WTC11 (cell line): ENCODE measurements at regions of chr7 and their contacts with region 1.

Region 1: DNA sequence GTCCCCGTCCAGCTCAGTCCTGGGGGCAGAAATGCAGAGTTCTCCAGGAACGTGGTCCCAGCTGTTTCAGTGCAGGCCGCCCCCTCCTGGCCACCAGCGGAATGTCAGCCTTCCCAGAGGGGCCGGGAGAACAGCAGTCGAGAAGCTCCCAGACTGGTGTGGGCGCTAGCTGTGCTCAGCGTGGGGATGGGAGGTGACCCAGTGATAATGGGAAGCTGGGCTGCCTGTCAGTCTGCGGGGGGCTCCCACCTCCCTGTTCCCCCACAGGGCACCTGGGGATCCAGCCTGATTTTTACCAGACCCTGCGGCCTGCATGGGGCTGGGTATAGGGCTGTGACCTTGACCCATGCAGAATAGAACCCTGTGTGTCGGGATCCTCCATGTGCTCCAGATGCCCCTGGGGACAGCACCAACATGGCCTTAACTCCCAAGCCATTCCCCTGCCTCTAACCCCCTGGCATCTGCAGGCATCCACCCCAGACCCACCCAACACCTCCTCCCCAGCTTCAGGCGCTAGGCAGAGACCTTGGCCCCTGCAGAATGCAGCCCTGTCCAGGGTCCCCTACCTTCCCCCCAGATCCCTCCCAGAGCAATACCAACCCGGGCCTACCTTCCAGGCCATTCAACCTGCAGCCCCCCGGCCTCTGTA is 946 bp upstream of the ELN start:
- DNase-seq: peak; percentile 90
- ATAC-seq: peak; percentile 73
- H3K4me3 Mint-ChIP-seq: no peak overlapping the region
- H3K27ac Mint-ChIP-seq: no peak overlapping the region
- H3K4me1 Mint-ChIP-seq: peaks cover 36% of the 10 kb centered on the region
- H3K27me3 Mint-ChIP-seq: peaks cover 10% of the 10 kb centered on the region
- CTCF ChIP-seq: peak; percentile 90

Region 2: DNA sequence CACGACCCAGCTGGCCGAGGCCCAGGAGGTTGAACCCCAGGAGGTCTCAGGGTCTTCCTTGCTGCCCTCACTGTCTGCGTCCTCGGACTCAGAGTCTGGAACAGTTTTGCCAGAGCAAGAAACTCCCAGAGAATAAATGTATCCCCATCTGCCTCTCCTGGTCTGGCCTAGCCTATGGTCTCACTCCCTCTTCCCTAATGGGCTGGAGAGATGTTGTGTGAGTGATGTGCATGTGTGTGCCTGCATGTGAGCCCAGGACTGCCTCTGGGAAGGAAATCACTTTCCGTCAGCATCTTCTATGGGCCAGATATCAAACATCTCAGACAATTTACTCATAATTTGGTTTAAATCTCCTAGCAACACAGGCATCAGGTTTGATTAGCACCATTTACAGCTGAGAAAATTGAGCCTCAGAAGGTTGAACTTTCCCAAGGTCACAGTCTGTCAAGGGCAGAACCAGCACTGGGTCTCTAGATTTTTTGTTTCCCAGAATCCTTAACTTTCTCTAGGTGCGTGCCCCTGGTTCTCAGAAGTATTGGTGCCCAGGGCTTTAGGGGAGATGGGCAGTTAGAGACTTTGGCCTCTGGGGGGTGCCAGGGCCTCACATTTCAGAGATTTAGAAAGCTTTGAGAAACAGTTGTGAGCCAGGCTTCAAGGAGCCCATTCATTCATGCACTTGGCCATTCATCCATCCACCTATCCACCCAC is 161.1 kb before region 1 on chr7:
- CTCF ChIA-PET with region 1: interaction called, 36 read pairs
- POLR2A ChIA-PET with region 1: no interaction called
- DNase-seq: peak; percentile 51
- ATAC-seq: peak; percentile 55
- H3K4me3 Mint-ChIP-seq: no peak overlapping the region
- H3K27ac Mint-ChIP-seq: no peak overlapping the region
- H3K4me1 Mint-ChIP-seq: peaks cover 10% of the 10 kb centered on the region
- H3K27me3 Mint-ChIP-seq: no peaks in the 10 kb centered on the region
- CTCF ChIP-seq: peak; percentile 41

Region 3: DNA sequence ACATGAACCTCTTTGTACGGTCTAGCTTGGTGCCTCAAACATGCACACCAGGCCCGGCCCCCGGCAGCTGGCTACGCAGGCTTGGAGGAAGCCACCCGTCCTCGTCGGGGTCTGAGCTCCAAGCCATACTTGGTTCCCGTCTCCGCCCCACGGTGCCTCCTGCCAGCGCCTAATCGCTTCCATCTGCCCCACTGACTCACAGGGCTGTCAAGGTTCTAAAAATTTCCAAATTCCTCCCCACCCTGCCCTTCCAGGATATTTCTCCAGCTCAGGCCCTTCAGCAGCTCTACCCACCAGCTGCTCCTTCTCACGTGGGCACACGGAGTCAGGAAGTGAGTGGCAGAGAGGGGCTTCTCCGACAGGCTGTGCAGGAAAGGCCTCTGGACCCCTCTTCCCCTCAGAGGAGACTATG is 127.3 kb before region 1 on chr7:
- CTCF ChIA-PET with region 1: interaction called, 19 read pairs
- POLR2A ChIA-PET with region 1: no interaction called
- DNase-seq: no peak
- ATAC-seq: no peak
- H3K4me3 Mint-ChIP-seq: no peak overlapping the region
- H3K27ac Mint-ChIP-seq: no peak overlapping the region
- H3K4me1 Mint-ChIP-seq: peaks cover 16% of the 10 kb centered on the region
- H3K27me3 Mint-ChIP-seq: no peaks in the 10 kb centered on the region; the same call in 1 of the 2 replicates
- CTCF ChIP-seq: no peak

Region 4: GRCh38 chr7:73978661-73979563 is 48.1 kb before region 1 on chr7:
- CTCF ChIA-PET with region 1: interaction called, 35 read pairs
- POLR2A ChIA-PET with region 1: interaction called, 4 read pairs
- DNase-seq: peak; percentile 83
- ATAC-seq: peak; percentile 97
- H3K4me3 Mint-ChIP-seq: no peak overlapping the region
- H3K27ac Mint-ChIP-seq: 0 out of 2 replicates have a peak overlapping the region, but pooled peaks have one; percentile 63
- H3K4me1 Mint-ChIP-seq: no peaks in the 10 kb centered on the region
- H3K27me3 Mint-ChIP-seq: no peaks in the 10 kb centered on the region; the same call in 1 of the 2 replicates
- CTCF ChIP-seq: peak; percentile 38; the same call in 1 of the 2 replicates

Region 5: DNA sequence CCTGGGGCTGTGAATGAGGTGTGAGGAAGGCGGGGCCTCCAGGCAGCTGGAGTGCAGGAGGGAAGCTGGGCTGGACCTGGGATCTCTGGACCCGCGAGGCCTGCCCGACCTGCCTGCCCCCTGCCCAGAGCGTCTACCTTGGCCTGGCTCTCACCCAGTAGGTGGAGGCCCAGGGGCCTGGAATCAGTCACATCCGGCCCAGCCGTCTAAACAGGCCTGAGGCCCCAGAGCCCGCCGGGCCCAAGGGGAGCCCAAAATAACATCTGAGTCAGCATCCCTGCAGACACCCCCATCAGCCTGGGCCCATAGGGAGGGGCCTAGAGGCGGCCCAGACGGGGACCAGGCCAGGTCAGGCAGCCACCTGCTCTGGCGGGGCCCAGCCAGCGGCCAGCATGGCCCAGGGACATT is 14.2 kb before region 1 on chr7:
- CTCF ChIA-PET with region 1: interaction called, 22 read pairs
- POLR2A ChIA-PET with region 1: no interaction called
- DNase-seq: no peak
- ATAC-seq: peak; percentile 54
- H3K4me3 Mint-ChIP-seq: no peak overlapping the region
- H3K27ac Mint-ChIP-seq: no peak overlapping the region
- H3K4me1 Mint-ChIP-seq: no peaks in the 10 kb centered on the region
- H3K27me3 Mint-ChIP-seq: no peaks in the 10 kb centered on the region
- CTCF ChIP-seq: no peak

Region 6: GRCh38 chr7:74061840-74062539 is 35.0 kb after region 1 on chr7:
- CTCF ChIA-PET with region 1: interaction called, 15 read pairs
- POLR2A ChIA-PET with region 1: no interaction called
- DNase-seq: no peak
- ATAC-seq: peak; percentile 39
- H3K4me3 Mint-ChIP-seq: no peak overlapping the region
- H3K27ac Mint-ChIP-seq: no peak overlapping the region; the same call in 1 of the 2 replicates
- H3K4me1 Mint-ChIP-seq: no peaks in the 10 kb centered on the region
- H3K27me3 Mint-ChIP-seq: no peaks in the 10 kb centered on the region; the same call in 1 of the 2 replicates
- CTCF ChIP-seq: no peak